A549 (cell line): ENCODE measurements at regions of chr11 and their contacts with region 1.

Region 1: DNA sequence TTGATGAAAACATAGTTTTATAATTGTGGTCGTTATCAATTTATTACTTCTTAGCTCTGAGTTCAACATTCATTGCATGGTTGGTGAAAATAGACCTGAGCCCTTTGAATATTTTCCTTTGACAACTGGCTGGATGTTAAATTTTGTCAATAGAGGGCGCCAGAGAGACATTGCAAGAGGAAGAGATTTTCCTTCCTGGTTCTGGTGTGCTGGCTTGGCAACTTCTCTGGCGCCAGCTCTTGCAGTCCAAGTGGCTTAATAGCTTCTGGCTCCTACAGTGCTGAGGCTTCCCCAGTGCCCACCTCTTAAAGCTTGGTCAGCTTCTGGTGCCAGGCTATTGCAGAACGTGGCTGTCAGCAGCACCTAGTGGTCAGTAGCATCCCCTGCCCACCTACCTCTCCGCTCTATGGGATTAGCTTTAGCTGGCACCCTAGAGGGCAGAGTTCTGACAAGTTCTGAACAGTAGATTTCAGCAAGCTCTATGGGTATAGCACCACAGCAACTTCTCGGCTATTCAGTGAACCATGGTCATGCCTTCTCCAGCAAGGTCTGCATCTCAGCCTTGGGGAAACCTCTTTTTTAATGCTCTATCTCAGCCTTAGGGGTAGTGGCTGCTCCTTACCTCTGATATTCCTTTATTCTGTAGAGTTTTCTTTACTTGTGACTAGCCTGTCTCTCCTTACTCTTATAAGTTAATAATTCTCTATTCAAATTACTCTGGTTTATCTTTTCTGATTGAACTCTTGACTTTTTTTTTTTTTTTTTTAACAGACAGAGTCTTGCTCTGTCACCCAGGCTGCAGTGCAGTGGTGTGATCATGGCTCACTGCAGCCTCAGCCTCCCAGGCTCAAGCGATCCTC is 59.4 kb downstream of the ACER3 start:
- DNase-seq: peak; percentile 60 to 87
- ATAC-seq: peak; percentile 96 to 98
- H3K4me3 ChIP-seq: no peak overlapping the region
- H3K27ac ChIP-seq: peak overlapping the region; percentile 6 to 74; a peak in 4 of 6 replicates
- H3K4me1 ChIP-seq: peaks cover 14% of the 10 kb centered on the region; the same call in 2 of the 3 replicates
- CTCF ChIP-seq: peak; percentile 99
- EP300 ChIP-seq: no peak
- POLR2A ChIP-seq: no peak
- RAD21 ChIP-seq: peak; percentile 75 to 91

Region 2: GRCh38 chr11:76577199-76577920 is 342.8 kb before region 1 on chr11:
- CTCF ChIA-PET with region 1: no interaction called
- POLR2A ChIA-PET with region 1: no interaction called
- DNase-seq: peak in 1 of 2 experiments; percentile 58
- ATAC-seq: peak; percentile 82 to 90
- H3K4me3 ChIP-seq: no peak overlapping the region
- H3K27ac ChIP-seq: peak overlapping the region; percentile 44 to 52; a peak in 5 of 6 replicates
- H3K4me1 ChIP-seq: peaks cover 14% of the 10 kb centered on the region
- CTCF ChIP-seq: no peak
- EP300 ChIP-seq: no peak
- POLR2A ChIP-seq: no peak
- RAD21 ChIP-seq: no peak

Region 3: GRCh38 chr11:76721755-76722677 is 198.1 kb before region 1 on chr11:
- CTCF ChIA-PET with region 1: interaction called, 27 read pairs
- POLR2A ChIA-PET with region 1: no interaction called
- DNase-seq: peak; percentile 67 to 80
- ATAC-seq: peak; percentile 91 to 97
- H3K4me3 ChIP-seq: no peak overlapping the region
- H3K27ac ChIP-seq: peak overlapping the region in 1 of 2 experiments; percentile 61; a peak in 3 of 6 replicates
- H3K4me1 ChIP-seq: 0 out of 3 replicates have a peak, but pooled peaks cover 4% of the 10 kb centered on the region
- CTCF ChIP-seq: peak; percentile 83
- EP300 ChIP-seq: no peak
- POLR2A ChIP-seq: no peak
- RAD21 ChIP-seq: peak; percentile 68

Region 4: DNA sequence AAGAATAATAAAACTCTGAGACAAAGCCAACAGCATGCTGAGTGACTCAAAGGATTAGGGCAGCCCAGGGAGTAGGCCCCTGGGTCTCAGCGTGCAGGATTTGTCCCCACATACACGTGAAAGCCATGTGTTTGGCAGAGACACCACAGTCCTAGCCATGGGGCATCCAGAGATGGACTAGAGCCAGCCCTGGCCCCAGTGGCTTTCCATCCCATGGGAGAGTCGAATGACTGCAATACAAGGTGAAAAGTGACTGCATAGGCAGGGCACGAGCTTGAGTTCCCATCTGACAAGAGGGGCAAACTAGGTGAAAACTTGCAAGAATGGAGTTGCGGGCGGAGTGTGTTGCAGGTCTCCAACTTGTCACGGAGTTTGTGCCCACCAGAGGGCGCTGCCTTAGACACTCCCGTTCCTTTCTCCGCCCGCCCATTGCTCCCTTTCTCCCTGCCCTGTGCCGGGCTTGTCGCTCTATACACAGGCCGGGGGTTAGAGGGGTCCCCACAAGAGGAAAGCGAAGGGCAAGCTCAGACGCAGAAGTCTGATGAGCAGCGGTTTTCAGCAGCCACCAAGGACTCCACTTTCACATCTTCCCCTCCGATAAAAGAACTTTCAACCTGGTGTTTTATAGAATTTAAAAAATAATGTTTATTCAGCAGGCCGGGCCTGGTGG is 112.8 kb before region 1 on chr11:
- CTCF ChIA-PET with region 1: interaction called, 119 read pairs
- POLR2A ChIA-PET with region 1: interaction called, 3 read pairs
- DNase-seq: peak; percentile 76 to 89
- ATAC-seq: peak; percentile 54 to 74
- H3K4me3 ChIP-seq: no peak overlapping the region
- H3K27ac ChIP-seq: peak overlapping the region; percentile 66 to 98
- H3K4me1 ChIP-seq: peaks cover 53% of the 10 kb centered on the region
- CTCF ChIP-seq: peak; percentile 86
- EP300 ChIP-seq: no peak
- POLR2A ChIP-seq: no peak
- RAD21 ChIP-seq: peak; percentile 66 to 73

Region 5: GRCh38 chr11:76888989-76889388 is 31.1 kb before region 1 on chr11:
- CTCF ChIA-PET with region 1: interaction called, 18 read pairs
- POLR2A ChIA-PET with region 1: no interaction called
- DNase-seq: no peak
- ATAC-seq: peak in 1 of 2 experiments; percentile 49; a peak in 4 of 6 replicates
- H3K4me3 ChIP-seq: no peak overlapping the region
- H3K27ac ChIP-seq: no peak overlapping the region
- H3K4me1 ChIP-seq: peaks cover 16% of the 10 kb centered on the region
- CTCF ChIP-seq: no peak
- EP300 ChIP-seq: no peak
- POLR2A ChIP-seq: no peak
- RAD21 ChIP-seq: no peak

Region 6: GRCh38 chr11:76978818-76979217 is 58.7 kb after region 1 on chr11:
- CTCF ChIA-PET with region 1: interaction called, 14 read pairs
- POLR2A ChIA-PET with region 1: no interaction called
- DNase-seq: no peak
- ATAC-seq: no peak; a peak in 1 of 6 replicates
- H3K4me3 ChIP-seq: no peak overlapping the region
- H3K27ac ChIP-seq: no peak overlapping the region
- H3K4me1 ChIP-seq: no peaks in the 10 kb centered on the region
- CTCF ChIP-seq: no peak
- EP300 ChIP-seq: no peak
- POLR2A ChIP-seq: no peak
- RAD21 ChIP-seq: no peak

Region 7: GRCh38 chr11:77047007-77047927 is 127.2 kb after region 1 on chr11:
- CTCF ChIA-PET with region 1: interaction called, 72 read pairs
- POLR2A ChIA-PET with region 1: no interaction called
- DNase-seq: peak; percentile 69 to 95
- ATAC-seq: peak; percentile 80 to 88
- H3K4me3 ChIP-seq: peak overlapping the region; percentile 55
- H3K27ac ChIP-seq: peak overlapping the region; percentile 64
- H3K4me1 ChIP-seq: peaks cover 12% of the 10 kb centered on the region; the same call in 2 of the 3 replicates
- CTCF ChIP-seq: peak; percentile 93
- EP300 ChIP-seq: no peak
- POLR2A ChIP-seq: no peak
- RAD21 ChIP-seq: peak; percentile 71 to 86

Region 8: GRCh38 chr11:77082838-77083562 is 162.9 kb after region 1 on chr11:
- CTCF ChIA-PET with region 1: no interaction called
- POLR2A ChIA-PET with region 1: no interaction called
- DNase-seq: no peak
- ATAC-seq: no peak
- H3K4me3 ChIP-seq: no peak overlapping the region
- H3K27ac ChIP-seq: no peak overlapping the region
- H3K4me1 ChIP-seq: no peaks in the 10 kb centered on the region
- CTCF ChIP-seq: no peak
- EP300 ChIP-seq: no peak
- POLR2A ChIP-seq: no peak
- RAD21 ChIP-seq: no peak